Adrenal gland (tissue), 19 donors: ENCODE measurements at regions of chr9 and their contacts with region 1.

Region 1: DNA sequence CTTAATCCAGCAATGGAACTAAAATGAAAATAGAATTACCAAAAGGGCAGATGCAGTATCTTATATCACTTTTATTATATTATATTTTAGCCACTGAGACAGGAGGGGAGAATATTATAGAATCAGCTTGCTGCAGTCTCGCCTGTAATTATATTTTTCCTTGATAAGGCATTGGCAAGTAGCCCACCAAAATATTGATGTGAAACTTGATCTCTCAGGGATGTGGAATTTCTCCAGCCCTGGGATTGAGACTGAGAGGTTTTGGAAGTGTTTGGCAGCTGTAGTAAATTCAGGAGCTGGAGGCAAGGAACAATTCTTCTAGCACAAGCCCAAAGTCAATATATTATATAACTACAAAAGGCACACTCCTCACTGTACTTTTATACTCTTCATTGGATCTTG is 142.1 kb upstream of the ADAMTSL1 start:
- DNase-seq: peak in 1 of 7 donors; percentile 12
- H3K4me3 ChIP-seq: no peak overlapping the region
- H3K27ac ChIP-seq: no peak overlapping the region
- H3K4me1 ChIP-seq: peaks cover 6 to 17% of the 10 kb centered on the region in 2 donors
- H3K27me3 ChIP-seq: no peaks in the 10 kb centered on the region
- CTCF ChIP-seq: no peak
- POLR2A ChIP-seq: no peak

Region 2: DNA sequence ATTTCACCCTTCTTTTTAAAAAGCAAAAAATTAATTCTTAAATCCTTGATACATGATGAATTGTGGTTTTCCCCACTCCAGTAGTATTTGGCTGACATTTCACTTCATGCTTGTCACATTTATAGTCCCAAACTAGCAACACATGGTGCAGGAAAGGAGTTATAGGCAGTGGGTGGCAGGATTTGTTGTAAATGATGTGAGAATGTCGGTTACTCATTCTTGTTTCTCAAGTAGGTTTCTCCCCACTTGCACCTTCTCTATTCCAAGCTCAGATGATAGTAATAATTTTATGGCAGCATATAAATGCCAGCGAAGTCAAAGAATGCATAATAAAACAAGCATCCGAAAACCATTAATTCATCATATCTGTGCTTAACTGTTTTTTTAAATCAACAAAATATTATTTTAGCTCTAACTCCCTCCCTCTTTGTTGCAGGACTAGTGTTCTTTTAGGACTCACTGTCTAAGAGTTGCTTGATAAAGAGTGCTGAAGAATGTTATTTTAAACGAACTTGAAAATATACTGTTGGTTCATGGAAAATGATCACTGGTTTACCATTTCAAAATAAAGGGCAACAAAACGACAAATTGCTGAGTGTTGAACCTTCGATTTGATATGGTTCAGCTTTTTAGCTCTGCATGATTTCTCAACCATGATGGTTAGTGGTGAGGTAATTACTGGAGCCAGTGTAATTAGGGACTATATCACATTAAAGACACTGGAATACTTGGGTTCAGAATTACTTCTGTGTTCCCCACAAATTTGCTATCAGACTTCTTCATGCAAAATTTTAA is 54.1 kb after region 1 on chr9:
- intact Hi-C with region 1: loop called in 1 of 2 experiments (anchors 10 kb)
- DNase-seq: no peak
- H3K4me3 ChIP-seq: no peak overlapping the region
- H3K27ac ChIP-seq: no peak overlapping the region
- H3K4me1 ChIP-seq: no peaks in the 10 kb centered on the region
- H3K27me3 ChIP-seq: no peaks in the 10 kb centered on the region
- CTCF ChIP-seq: no peak
- POLR2A ChIP-seq: no peak